Common myeloid progenitor, CD34-positive (primary cell): ENCODE measurements at regions of chr2 and their contacts with region 1.

Region 1: GRCh38 chr2:177263451-177264208 is 897 bp downstream of the NFE2L2 start:
- DNase-seq: peak; percentile 98 to 99 (median 99)
- H3K4me3 ChIP-seq: peak overlapping the region; percentile 83 to 98 (median 90)
- H3K27ac ChIP-seq: peak overlapping the region; percentile 99 to 100
- H3K4me1 ChIP-seq: peaks cover 29 to 57% (median 44%) of the 10 kb centered on the region in 4 experiments
- H3K27me3 ChIP-seq: no peaks in the 10 kb centered on the region

Region 2: GRCh38 chr2:177010861-177011260 is 252.8 kb before region 1 on chr2:
- CTCF ChIA-PET with region 1: no interaction called
- POLR2A ChIA-PET with region 1: no interaction called
- DNase-seq: peak in 1 of 3 donors; percentile 27
- H3K4me3 ChIP-seq: no peak overlapping the region
- H3K27ac ChIP-seq: no peak overlapping the region
- H3K4me1 ChIP-seq: peaks cover 0 to 25% (median 11%) of the 10 kb centered on the region in 4 experiments
- H3K27me3 ChIP-seq: no peaks in the 10 kb centered on the region

Region 3: DNA sequence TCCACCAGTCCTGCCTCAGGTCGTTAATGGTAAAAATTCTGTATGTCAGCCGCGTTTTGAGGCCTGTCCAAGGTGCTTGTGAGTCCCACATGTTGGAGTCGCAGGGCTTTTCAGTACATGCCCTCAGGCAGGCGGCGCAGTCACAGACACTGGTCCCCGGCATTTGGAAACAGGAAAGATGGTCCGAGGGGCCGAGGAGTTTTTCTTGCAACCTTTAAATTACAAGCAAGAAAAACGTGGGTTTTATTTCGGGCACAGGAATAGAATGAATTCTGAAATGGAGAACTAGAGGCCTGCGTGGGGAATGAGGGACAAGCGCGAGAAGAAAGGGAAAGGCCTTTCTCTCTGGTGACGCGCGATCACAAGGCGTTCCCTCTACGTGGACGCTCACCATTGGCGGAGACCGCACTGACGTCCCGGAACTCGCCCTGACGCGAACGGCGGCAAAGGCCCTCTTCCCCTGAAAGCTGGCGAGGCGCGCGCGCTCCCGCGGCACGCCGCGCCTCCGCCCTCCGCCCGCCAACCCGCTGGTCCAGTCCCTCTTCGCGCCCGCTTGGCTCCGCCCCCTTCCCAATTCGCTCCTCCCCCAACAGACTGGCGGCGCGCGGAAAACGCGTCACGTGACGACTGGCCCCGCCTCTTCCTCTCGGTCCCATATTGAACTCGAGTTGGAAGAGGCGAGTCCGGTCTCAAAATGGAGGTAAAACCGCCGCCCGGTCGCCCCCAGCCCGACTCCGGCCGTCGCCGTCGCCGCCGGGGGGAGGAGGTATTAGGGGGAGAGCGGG is 51.3 kb before region 1 on chr2 and contains the start of gene HNRNPA3:
- CTCF ChIA-PET with region 1: interaction called, 4 read pairs
- POLR2A ChIA-PET with region 1: interaction called, 31 read pairs
- DNase-seq: peak; percentile 99 to 100 (median 99)
- H3K4me3 ChIP-seq: peak within 1 kb of the TSS; percentile 55 to 97 (median 85)
- H3K27ac ChIP-seq: peak within 1 kb of the TSS; percentile 100
- H3K4me1 ChIP-seq: peaks cover 20 to 36% (median 29%) of the 10 kb centered on the region in 4 experiments
- H3K27me3 ChIP-seq: no peaks in the 10 kb centered on the region

Region 4: DNA sequence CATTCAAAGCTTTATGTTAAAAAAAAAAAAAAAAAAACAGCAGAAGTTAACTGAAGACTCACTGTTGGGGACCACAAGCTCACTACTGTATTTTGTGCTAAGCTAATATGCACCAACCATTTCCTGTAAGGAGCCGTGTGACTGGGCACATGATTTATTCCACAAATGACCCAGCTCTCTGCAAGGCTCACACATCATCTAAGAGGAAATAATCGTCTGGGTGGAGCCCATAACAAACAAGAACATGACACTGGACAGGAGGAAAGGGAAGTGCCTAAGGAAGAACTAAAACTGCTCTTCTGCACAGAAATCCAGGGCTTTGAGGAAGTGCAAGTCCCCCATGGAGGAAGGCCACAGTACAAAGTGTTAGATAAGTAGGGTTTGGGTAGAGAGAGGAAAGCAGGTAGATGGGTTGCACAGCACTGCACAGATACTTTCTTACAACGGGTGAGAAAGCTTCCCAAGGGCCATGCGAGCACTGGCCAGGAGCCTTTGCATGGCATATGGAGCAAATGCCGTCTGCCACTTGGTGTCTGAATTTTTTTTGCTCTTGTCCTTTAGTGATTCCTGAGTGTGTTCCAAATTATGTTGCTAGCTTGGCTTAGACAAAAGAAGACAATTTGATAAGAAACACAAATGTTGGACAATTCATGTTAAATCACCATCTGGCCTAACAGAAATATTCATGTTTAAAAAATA is 23.5 kb before region 1 on chr2:
- CTCF ChIA-PET with region 1: interaction called, 27 read pairs
- POLR2A ChIA-PET with region 1: interaction called, 22 read pairs
- DNase-seq: peak; percentile 83 to 97 (median 95)
- H3K4me3 ChIP-seq: peak overlapping the region in 2 of 7 experiments; percentile 13 to 57
- H3K27ac ChIP-seq: peak overlapping the region in 1 of 2 experiments; percentile 70
- H3K4me1 ChIP-seq: peaks cover 28 to 55% (median 46%) of the 10 kb centered on the region in 4 experiments
- H3K27me3 ChIP-seq: no peaks in the 10 kb centered on the region

Region 5: GRCh38 chr2:177289824-177290628 is 26.4 kb after region 1 on chr2:
- CTCF ChIA-PET with region 1: interaction called, 89 read pairs
- POLR2A ChIA-PET with region 1: interaction called, 4 read pairs
- DNase-seq: peak in 2 of 3 donors; percentile 51 to 58
- H3K4me3 ChIP-seq: peak overlapping the region in 2 of 7 experiments; percentile 26 to 28
- H3K27ac ChIP-seq: no peak overlapping the region
- H3K4me1 ChIP-seq: peaks cover 0 to 23% (median 7%) of the 10 kb centered on the region in 4 experiments
- H3K27me3 ChIP-seq: no peaks in the 10 kb centered on the region

Region 6: DNA sequence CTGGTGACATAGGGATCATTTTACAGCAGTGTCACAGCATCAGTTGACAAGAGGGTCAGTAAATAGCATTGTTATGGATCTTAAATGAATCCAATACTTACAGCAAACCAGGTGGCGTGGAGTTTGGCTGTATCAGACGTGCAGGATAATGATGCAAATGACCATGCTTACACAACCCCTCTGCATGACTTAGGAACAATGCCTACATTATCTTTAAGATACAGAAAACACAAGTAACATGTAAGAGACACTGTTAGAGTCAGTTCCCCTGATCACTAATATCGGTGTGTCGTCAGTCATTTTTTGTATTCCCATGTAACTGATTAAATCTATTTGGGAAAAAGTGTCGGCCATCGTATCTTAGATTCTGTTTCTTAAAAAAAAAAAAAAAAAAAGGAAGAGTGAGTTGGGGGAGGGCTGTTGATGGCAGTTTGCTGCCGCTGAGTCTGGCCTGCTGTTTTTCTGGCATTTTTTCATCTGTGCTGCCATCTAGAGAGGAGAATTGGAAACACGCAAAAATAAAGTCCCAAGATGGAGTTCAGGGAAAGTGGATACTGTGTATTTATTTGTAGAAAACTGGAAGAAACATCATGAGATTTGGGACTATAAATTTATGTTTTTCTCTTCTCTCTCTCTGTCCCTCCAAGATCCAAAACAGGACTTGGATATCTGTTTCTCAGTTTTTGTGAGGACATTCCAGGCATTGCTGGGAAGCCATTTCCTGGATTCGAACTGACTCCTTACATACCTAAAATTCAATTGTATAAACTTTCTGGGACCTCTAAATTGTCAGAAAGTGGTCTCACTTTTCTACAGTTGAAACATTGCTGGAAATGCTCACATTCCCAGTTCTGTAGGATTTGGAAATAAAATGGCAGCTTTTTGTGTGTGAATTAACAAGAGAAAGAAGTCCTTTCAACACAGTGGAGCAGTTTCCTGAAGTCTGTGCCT is 68.7 kb after region 1 on chr2:
- CTCF ChIA-PET with region 1: interaction called, 12 read pairs
- POLR2A ChIA-PET with region 1: no interaction called
- DNase-seq: peak; percentile 82 to 89 (median 87)
- H3K4me3 ChIP-seq: peak overlapping the region in 2 of 7 experiments; percentile 52 to 68
- H3K27ac ChIP-seq: peak overlapping the region in 1 of 2 experiments; percentile 43
- H3K4me1 ChIP-seq: peaks cover under 1 to 17% (median 12%) of the 10 kb centered on the region in 4 experiments
- H3K27me3 ChIP-seq: no peaks in the 10 kb centered on the region

Region 7: GRCh38 chr2:177783835-177784744 is 520.5 kb after region 1 on chr2:
- CTCF ChIA-PET with region 1: no interaction called
- POLR2A ChIA-PET with region 1: no interaction called
- DNase-seq: peak; percentile 45 to 86 (median 83)
- H3K4me3 ChIP-seq: peak overlapping the region in 3 of 7 experiments; percentile 11 to 60 (median 25)
- H3K27ac ChIP-seq: peak overlapping the region in 1 of 2 experiments; percentile 32
- H3K4me1 ChIP-seq: peaks cover 0 to 25% (median 13%) of the 10 kb centered on the region in 4 experiments
- H3K27me3 ChIP-seq: no peaks in the 10 kb centered on the region